Dorsolateral prefrontal cortex (tissue), 120 donors: ENCODE measurements at regions of chr2 and their contacts with region 1.

Region 1: GRCh38 chr2:62505750-62506420 is at the start of gene TMEM17:
- DNase-seq: peak; percentile 74 to 94 (median 87)
- H3K4me3 ChIP-seq: peak within 1 kb of the TSS; percentile 55 to 87 (median 73)
- H3K27ac ChIP-seq: peak within 1 kb of the TSS; percentile 79 to 98 (median 95)
- H3K27me3 ChIP-seq: no peaks in the 10 kb centered on the region
- CTCF ChIP-seq: peak in 22 of 56 donors; percentile 7 to 42 (median 18)
- total RNA-seq, gene TMEM17: 1.8 to 9.6 (median 5.2) TPM

Region 2: GRCh38 chr2:62475172-62476011 is 30.5 kb before region 1 on chr2:
- intact Hi-C with region 1: loop called (anchors 2 to 5 kb)
- DNase-seq: peak in 8 of 10 donors; percentile 40 to 71 (median 58)
- H3K4me3 ChIP-seq: peak overlapping the region; percentile 0 to 71 (median 50)
- H3K27ac ChIP-seq: peak overlapping the region; percentile 2 to 87 (median 71)
- H3K27me3 ChIP-seq: no peaks in the 10 kb centered on the region
- CTCF ChIP-seq: peak in 4 of 56 donors; percentile 13 to 38 (median 30)

Region 3: DNA sequence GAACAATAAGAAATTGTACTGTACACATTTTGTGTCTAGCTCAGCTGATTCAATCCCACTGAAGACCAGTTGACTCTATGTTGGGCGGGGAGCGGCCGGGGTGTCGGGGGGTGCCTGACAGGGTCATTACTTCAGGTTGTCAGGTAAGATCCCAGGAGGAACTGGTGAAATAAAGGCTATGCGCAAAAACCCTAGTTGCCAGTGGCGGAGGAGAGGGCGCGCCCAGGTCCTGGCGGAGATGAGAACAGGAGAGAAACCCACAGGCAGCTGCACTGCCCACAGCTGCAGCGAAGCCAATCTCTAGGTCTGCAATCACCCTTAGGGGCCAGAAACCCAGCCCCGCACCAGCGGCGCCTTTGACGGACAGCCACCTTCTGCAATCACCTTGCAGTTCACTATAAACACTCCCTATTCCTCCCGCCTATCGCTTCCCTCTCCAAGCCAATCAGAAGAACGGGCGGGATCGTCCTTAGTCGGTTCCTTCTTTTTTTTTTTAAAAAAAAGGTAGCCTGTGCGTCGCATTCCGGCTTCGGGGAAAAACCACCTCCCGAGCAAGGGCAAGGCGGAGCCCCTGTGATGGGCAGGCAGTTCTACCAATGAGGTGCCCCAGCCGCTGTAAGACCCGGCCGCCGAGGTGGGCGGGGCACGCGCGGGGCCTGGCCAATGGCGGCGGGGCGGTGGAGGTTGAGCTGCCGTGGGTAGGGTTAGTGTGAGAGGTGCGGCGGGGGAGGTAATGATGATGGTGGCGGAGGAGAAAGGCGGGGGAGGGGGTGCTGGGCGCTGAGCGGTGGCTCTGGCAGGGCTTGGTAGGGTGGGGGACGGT is 199.3 kb after region 1 on chr2 and contains the start of gene EHBP1:
- intact Hi-C with region 1: loop called (anchors 1 kb)
- DNase-seq: peak; percentile 97 to 100 (median 99)
- H3K4me3 ChIP-seq: peak within 1 kb of the TSS; percentile 57 to 95 (median 82)
- H3K27ac ChIP-seq: peak within 1 kb of the TSS; percentile 39 to 95 (median 88)
- H3K27me3 ChIP-seq: no peaks in the 10 kb centered on the region
- CTCF ChIP-seq: peak in 3 of 56 donors; percentile 9 to 29 (median 9)
- total RNA-seq, gene EHBP1: 66.5 to 148 (median 107) TPM